Left cardiac atrium (tissue), 4 donors: ENCODE measurements at regions of chr10 and their contacts with region 1.

Region 1: GRCh38 chr10:125982260-125982948 is 86.0 kb downstream of the FANK1 start:
- DNase-seq: no peak
- ATAC-seq: peak; percentile 55 to 73

Region 2: DNA sequence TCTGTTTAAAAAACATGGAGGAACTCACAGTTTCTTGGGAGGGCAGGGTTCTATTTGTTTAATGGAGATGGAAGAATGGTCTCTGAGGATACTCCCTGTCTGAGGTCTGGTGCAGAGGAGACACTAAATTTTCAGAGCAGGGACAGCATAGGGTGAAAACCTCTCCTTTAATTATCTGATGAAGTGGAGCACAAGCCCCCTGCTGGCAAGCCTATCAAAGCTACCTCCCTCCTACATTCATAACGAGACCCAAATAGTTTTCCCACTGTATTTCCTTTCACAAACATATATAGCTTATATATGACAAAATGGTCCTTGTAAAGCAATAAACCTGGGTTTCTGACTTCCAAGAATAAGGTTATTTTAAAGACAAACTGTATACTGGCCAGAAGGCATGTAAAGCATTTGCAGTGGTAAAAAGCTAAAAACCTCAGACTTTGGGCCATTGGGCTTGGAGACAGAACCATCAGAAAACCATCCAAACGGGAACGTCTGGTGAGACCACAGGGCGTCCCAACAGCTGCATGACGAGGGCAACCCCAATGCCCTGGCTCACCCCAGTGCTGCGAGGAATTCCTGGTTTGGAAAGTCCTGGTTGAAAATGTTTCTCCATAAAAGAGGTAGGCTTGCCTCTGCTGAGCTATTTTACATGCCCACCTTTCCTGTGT is 115.3 kb after region 1 on chr10:
- intact Hi-C with region 1: loop called in 1 of 2 experiments (anchors 5 kb)
- DNase-seq: no peak
- ATAC-seq: no peak

Region 3: DNA sequence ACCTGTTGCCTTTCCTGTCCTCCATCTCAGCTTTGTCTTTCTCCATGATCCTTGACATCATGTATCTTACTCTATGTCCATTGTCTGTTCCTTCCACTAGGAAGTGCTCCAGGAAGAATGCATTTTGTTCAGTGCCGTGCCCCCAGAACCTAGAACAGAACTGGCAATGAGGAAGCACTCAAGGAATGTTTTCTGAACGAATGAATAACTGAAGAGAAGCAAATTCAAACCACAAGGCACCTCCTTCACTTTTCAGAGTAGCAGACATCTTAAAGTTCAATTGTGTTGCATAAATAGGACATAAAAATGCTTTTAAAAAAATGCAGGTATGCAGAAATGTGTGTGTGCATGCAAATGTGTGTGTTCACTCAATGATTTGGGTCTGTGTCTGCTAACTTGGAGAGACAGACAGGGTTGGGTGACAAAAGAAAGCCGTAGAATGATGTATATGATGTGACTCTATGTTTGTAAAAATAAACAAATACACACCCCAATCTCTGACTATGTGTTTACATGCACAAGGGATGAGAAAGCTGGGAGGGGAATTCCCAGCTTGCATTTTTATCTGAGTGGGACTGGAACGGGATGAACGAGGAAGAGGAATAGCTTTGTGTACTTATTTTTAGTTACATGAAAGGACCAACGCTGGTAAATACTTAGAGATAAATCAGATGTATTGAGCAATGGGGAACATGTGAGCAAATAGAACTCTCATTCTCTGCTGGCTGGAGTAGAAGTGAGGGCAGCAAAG is 151.7 kb after region 1 on chr10:
- intact Hi-C with region 1: no loop called
- DNase-seq: no peak
- ATAC-seq: no peak

Region 4: DNA sequence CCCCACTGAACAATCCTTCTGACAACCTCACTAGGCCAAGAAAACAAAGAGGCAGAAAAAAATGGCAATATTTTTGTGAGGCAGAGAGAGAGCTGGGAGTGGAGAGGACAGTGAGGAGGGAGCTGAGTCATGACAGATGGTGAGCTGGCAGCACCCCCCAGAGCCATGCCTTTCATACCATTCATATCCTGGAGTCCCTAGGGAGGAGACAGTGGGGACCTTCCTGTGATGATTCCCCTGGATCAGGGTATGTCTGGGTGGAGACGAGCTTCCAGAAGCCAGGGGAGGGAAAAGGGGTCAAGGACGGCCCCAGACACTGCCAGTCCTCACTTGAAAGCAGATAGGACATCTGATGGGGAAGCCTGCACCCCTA is 245.3 kb after region 1 on chr10:
- intact Hi-C with region 1: no loop called
- DNase-seq: no peak
- ATAC-seq: no peak

Region 5: GRCh38 chr10:126242397-126243287 is 260.2 kb after region 1 on chr10:
- intact Hi-C with region 1: no loop called
- DNase-seq: peak; percentile 65
- ATAC-seq: peak; percentile 79 to 80

Region 6: GRCh38 chr10:126252884-126253618 is 270.6 kb after region 1 on chr10:
- intact Hi-C with region 1: no loop called
- DNase-seq: no peak
- ATAC-seq: peak; percentile 16 to 90

Region 7: GRCh38 chr10:126387023-126387921 is 404.9 kb after region 1 on chr10:
- intact Hi-C with region 1: loop called (anchors 5 to 10 kb)
- DNase-seq: peak; percentile 63
- ATAC-seq: peak; percentile 56 to 64

Region 8: DNA sequence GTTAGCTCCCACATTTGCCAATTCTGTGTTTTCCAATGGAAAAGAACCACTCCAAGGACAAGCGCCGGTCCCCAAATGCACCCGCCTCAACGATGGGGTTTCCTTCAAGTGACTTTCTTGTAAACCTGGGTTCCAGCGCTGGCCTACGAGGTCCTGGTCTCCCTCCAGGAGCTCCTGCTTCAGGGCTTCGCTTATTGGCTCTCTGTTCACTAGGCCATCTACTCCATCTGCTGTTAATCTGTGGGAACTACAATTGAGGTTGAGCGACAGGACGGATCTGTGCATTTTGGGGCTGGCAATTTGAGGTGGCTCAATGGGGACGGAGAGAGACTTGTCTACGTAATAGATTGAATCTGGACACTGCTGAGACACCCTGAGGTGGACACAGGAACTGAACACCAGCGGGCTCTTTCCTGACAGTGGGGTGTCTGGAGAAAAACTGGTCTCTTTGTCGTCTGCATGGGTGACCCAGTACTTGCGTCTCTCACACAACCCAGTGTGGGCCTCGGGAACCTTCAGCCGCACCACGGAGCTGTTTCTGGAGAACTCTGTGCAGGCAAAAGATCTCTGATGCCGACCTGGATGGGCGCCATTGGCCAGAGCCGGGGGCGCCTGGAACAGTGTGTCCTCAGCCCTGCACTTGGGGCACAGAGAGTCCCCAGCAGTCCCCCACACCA is 521.8 kb after region 1 on chr10:
- intact Hi-C with region 1: loop called (anchors 5 kb)
- DNase-seq: peak; percentile 36
- ATAC-seq: peak; percentile 62 to 73

Region 9: DNA sequence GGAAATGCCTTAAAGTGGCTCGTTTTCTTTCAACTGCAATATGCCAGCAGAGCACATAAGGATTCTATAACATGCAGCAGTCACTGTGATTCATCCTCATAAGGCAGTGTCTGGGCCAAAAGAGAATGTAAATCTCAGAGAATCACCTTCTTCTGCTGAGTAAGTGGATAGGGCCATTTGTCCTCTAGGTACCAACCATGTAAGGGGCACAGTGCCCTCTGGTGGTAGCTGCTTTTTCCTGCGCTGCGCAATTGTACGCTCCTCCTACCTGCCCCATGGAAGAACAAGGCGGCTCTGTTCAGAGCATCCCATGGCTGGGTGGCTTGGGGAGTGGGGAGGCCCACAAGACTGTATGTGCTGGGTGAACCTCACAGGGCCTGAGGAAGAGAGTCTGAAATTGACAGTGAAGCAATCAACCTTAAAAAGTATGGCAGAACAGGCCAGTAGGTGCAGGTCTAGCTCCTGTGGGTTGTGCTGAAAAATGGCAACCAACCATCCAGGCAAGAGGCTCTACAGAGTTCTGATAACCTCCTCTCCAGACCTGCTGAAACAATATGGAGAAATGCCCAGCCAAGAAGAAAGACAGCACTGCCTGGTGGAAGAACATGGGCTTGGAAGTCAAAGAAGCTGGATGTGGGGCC is 766.7 kb after region 1 on chr10:
- intact Hi-C with region 1: loop called in 1 of 2 experiments (anchors 5 kb)
- DNase-seq: peak; percentile 55
- ATAC-seq: peak in 1 of 2 donors; percentile 68

Region 10: GRCh38 chr10:127577376-127577775 is 1595.0 kb after region 1 on chr10:
- intact Hi-C with region 1: loop called in 1 of 2 experiments (anchors 5 kb)
- DNase-seq: no peak
- ATAC-seq: no peak

Region 11: GRCh38 chr10:127853868-127854768 is 1871.7 kb after region 1 on chr10:
- intact Hi-C with region 1: loop called in 1 of 2 experiments (anchors 5 kb)
- DNase-seq: peak; percentile 65
- ATAC-seq: peak; percentile 89 to 95